Heart left ventricle (tissue), 16 donors: ENCODE measurements at regions of chr9 and their contacts with region 1.

Region 1: GRCh38 chr9:136944519-136945279 is at the starts of genes C8G and FBXW5:
- DNase-seq: peak; percentile 96 to 99 (median 97)
- ATAC-seq: peak; percentile 23 to 72 (median 67)
- H3K4me3 ChIP-seq: peak within 1 kb of the TSS; percentile 67 to 97 (median 92)
- H3K27ac ChIP-seq: peak within 1 kb of the TSS; percentile 90 to 98 (median 97)
- H3K4me1 ChIP-seq: peaks cover 7 to 70% (median 40%) of the 10 kb centered on the region in 12 donors
- H3K27me3 ChIP-seq: no peaks in the 10 kb centered on the region
- CTCF ChIP-seq: peak; percentile 90 to 100 (median 98)
- POLR2A ChIP-seq: peak; percentile 59 to 84
- total RNA-seq, gene C8G: 1.2 to 3.7 (median 1.5) TPM in 7 of 9 donors, not detected in the others
- total RNA-seq, gene FBXW5: 110 to 388 (median 147) TPM

Region 2: GRCh38 chr9:136790927-136791641 is 153.6 kb before region 1 on chr9 and contains the start of gene TMEM141:
- intact Hi-C with region 1: loop called in 7 of 10 experiments (anchors 1 to 5 kb)
- DNase-seq: peak; percentile 100
- ATAC-seq: peak; percentile 95 to 96 (median 96)
- H3K4me3 ChIP-seq: peak within 1 kb of the TSS; percentile 68 to 94 (median 82)
- H3K27ac ChIP-seq: peak within 1 kb of the TSS; percentile 92 to 99 (median 96)
- H3K4me1 ChIP-seq: peaks cover 6 to 58% (median 29%) of the 10 kb centered on the region in 12 donors
- H3K27me3 ChIP-seq: peaks cover 0 to under 1% (median 0%) of the 10 kb centered on the region in 9 donors
- CTCF ChIP-seq: no peak
- POLR2A ChIP-seq: peak in 1 of 2 donors; percentile 82
- total RNA-seq, gene TMEM141: 45.6 to 122 (median 63.3) TPM

Region 3: GRCh38 chr9:136840140-136840687 is 104.5 kb before region 1 on chr9:
- intact Hi-C with region 1: loop called in 4 of 10 experiments (anchors 5 kb)
- DNase-seq: no peak
- ATAC-seq: no peak
- H3K4me3 ChIP-seq: no peak overlapping the region
- H3K27ac ChIP-seq: no peak overlapping the region
- H3K4me1 ChIP-seq: peaks cover 10 to 41% (median 27%) of the 10 kb centered on the region in 12 donors
- H3K27me3 ChIP-seq: peaks cover 0 to 23% (median 9%) of the 10 kb centered on the region in 9 donors
- CTCF ChIP-seq: no peak
- POLR2A ChIP-seq: no peak

Region 4: DNA sequence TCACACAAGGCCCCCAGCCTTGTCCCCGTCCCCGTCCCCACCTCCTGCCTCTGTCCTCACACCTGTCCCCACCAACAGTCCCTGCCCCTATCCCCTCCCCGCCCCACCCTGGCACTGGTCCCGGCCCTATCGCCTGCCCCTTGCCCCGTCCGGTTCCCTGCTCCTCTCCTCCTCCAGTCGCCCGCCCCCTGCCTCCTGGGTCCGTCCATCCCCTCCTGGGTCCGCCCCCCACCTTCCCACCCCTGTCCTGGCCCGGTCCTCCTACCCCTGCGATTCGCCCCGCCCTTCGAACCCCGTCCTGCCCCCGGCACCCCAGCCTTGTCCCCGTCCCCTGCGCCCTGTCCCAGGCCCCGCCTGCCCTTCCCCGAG is 79.0 kb before region 1 on chr9:
- intact Hi-C with region 1: loop called in 4 of 10 experiments (anchors 1 to 5 kb)
- DNase-seq: peak in 3 of 5 donors; percentile 25 to 49 (median 43)
- ATAC-seq: peak in 2 of 4 donors; percentile 36 to 43
- H3K4me3 ChIP-seq: peak overlapping the region; percentile 41 to 97 (median 82)
- H3K27ac ChIP-seq: peak overlapping the region in 11 of 12 donors; percentile 76 to 96 (median 90)
- H3K4me1 ChIP-seq: peaks cover 0 to 27% (median 19%) of the 10 kb centered on the region in 12 donors
- H3K27me3 ChIP-seq: no peaks in the 10 kb centered on the region
- CTCF ChIP-seq: no peak
- POLR2A ChIP-seq: no peak

Region 5: DNA sequence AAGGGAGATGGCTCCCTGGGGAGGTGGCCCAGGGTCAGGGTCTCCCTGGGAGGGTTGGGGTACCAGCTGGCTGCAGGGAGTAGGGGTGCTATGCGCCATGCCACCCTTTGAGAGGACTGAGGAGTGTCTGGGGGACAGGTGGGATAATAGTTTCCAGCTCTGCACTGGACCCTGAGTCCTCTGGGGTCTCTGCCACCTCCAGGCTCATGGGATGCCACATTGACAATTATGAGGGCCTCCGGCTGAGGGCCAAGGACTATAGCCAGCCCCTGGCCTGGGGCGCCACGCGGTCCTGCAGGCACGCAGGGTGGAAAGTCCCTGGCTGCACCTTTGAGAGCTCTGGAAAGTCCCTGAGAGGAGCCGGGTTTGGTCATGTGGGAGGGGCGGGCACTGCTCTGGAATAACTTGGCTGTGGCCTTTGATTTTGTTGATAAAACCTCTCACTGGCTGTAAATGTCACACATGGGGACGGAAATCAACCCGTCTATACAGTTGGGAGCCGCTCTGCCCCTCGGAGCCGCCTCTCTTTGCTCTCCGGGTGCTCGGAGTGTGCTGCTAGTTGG is 42.4 kb before region 1 on chr9:
- intact Hi-C with region 1: loop called in 3 of 10 experiments (anchors 5 kb)
- DNase-seq: peak in 4 of 5 donors; percentile 78 to 85 (median 82)
- ATAC-seq: peak; percentile 84 to 94 (median 91)
- H3K4me3 ChIP-seq: peak overlapping the region in 5 of 12 donors; percentile 1 to 23 (median 11)
- H3K27ac ChIP-seq: peak overlapping the region; percentile 30 to 94 (median 80)
- H3K4me1 ChIP-seq: peaks cover 0 to 37% (median 32%) of the 10 kb centered on the region in 12 donors
- H3K27me3 ChIP-seq: no peaks in the 10 kb centered on the region
- CTCF ChIP-seq: no peak
- POLR2A ChIP-seq: peak in 1 of 2 donors; percentile 25

Region 6: GRCh38 chr9:136915632-136916329 is 28.9 kb before region 1 on chr9:
- intact Hi-C with region 1: no loop called
- DNase-seq: no peak
- ATAC-seq: no peak
- H3K4me3 ChIP-seq: no peak overlapping the region
- H3K27ac ChIP-seq: no peak overlapping the region
- H3K4me1 ChIP-seq: no peaks in the 10 kb centered on the region
- H3K27me3 ChIP-seq: no peaks in the 10 kb centered on the region
- CTCF ChIP-seq: no peak
- POLR2A ChIP-seq: no peak

Region 7: DNA sequence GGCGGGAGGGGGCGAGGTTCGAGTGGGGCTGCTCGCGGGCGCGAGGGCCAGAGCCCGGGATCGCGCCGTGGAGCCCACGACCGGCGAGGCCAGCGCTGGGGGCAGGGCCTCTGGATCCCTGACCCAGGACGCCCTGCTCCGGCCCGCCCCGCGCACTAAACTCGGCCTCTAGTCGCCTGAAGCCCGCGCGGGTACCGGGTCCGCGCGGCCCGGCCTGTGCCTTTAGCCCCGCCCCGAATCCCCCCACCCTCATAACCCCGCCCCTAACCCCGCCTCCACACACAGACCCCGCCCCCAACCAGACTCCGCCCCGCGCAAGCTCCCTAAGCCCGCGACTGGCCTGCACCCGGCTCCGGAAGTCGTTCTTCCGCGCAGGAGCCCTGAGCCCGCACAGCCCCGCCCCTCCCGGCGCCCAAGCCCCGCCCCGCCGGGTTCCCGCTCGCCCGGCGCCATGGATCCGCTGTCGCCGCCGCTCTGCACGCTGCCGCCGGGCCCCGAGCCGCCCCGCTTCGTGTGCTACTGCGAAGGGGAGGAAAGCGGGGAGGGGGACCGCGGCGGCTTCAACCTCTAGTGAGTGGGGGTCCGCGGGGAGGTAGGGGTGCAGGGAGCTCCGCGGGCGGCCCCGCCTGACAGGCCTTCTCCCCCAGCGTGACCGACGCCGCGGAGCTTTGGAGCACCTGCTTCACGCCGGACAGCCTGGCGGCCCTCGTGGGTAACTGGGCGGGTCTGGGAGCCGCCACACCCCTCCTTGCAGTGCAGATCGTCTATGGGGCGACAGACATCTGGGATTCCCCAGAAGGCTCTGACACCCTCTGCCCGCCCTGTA is 47.5 kb after region 1 on chr9 and contains the start of gene PAXX:
- intact Hi-C with region 1: loop called in 5 of 10 experiments (anchors 1 to 5 kb)
- DNase-seq: peak; percentile 94 to 97 (median 95)
- ATAC-seq: peak; percentile 89 to 94 (median 94)
- H3K4me3 ChIP-seq: peak within 1 kb of the TSS; percentile 60 to 98 (median 82)
- H3K27ac ChIP-seq: peak within 1 kb of the TSS; percentile 8 to 91 (median 87)
- H3K4me1 ChIP-seq: peaks cover 3 to 55% (median 31%) of the 10 kb centered on the region in 12 donors
- H3K27me3 ChIP-seq: peaks cover 0 to 28% (median 0%) of the 10 kb centered on the region in 9 donors
- CTCF ChIP-seq: no peak
- POLR2A ChIP-seq: peak in 1 of 2 donors; percentile 47
- total RNA-seq, gene PAXX: 15.0 to 35.3 (median 19.4) TPM

Region 8: DNA sequence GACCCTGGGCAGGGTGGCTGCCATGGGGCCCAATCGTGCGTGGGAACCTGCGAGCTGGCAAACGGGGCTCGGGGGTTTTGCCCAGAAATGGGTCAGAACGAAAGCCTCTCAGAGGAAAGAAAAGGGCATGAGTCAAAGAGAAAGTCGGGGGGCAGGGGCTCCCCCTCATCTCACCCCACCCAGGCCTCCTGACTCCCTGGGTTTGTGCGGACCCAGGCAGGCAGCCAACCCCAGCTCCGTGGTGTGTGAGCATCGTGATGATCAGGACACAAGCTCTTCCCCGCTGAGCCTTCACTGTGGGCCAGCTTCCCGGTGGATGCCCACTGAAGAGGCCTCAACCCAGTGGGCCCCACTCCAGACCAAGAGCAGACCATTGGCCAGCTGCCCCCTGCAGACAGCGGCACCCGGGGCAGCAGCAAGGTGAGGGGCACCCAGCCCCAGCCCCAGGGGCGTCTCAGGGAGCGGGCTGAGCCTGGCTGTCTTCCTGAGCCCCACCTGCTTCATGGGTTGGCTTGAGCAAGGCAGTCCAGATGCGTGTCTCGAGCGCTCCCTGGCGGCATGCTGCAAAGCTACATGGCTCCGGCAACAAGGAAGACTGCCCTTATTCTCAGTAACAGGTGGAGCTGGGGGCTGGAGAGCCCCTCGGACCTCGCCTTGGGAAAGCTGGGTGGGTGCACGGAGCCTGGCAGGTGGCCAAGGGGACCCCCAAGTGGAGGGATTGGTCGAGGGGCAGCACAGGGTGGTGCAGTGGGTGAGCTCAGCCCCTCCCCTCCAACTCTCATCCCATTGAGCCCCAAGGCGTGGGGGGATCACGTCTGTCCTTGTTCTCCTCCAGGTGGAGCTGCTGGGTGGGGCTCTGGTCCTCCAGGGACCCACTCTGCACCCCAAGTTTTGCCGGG is 90.4 kb after region 1 on chr9:
- intact Hi-C with region 1: loop called in 9 of 10 experiments (anchors 1 to 5 kb)
- DNase-seq: peak; percentile 79 to 93 (median 80)
- ATAC-seq: peak; percentile 64 to 82 (median 76)
- H3K4me3 ChIP-seq: peak overlapping the region in 2 of 12 donors; percentile 4 to 27
- H3K27ac ChIP-seq: peak overlapping the region in 2 of 12 donors; percentile 38 to 68
- H3K4me1 ChIP-seq: peaks cover 0 to 50% (median 11%) of the 10 kb centered on the region in 12 donors
- H3K27me3 ChIP-seq: no peaks in the 10 kb centered on the region
- CTCF ChIP-seq: peak; percentile 85 to 95 (median 90)
- POLR2A ChIP-seq: peak in 1 of 2 donors; percentile 9

Region 9: DNA sequence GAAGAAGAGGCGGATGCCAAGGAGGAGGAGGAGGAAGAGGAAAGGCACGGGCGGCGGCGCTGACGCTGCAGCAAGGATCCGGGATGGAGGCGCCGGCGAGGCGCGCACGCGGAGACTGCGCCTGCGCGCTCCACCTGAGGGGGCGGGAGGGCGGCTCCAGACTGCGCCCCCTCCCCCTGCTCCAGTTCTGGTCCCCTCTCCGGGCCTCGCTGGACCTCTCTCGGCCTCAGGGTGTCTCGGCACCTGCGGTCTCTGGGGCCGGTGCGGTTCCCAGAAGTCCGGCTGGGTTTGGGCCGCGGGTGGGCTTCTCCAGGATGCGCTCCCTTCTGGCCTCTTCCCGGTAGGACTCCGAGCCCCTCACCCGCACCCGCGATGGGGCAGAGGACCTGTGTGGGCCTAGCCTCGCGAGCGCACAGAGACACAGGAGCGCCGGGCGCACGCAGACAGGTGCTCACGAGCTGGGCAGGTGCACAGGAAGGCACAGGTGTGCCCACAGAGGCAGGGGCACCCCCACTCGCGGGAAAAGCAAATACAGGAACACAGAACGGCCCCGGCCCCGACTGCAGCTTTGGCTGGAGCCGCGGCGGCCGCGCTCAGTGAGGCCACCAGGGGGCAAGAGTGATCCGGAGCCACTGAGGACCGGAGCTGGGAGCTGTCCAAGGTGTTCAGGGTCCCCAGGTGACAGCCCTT is 101.5 kb after region 1 on chr9 and contains the start of gene NPDC1:
- intact Hi-C with region 1: no loop called
- DNase-seq: peak; percentile 82 to 90 (median 83)
- ATAC-seq: peak; percentile 45 to 71 (median 62)
- H3K4me3 ChIP-seq: peak within 1 kb of the TSS; percentile 62 to 92 (median 72)
- H3K27ac ChIP-seq: peak within 1 kb of the TSS; percentile 80 to 96 (median 88)
- H3K4me1 ChIP-seq: peaks cover 0 to 53% (median 35%) of the 10 kb centered on the region in 12 donors
- H3K27me3 ChIP-seq: peaks cover 0 to 56% (median 26%) of the 10 kb centered on the region in 9 donors
- CTCF ChIP-seq: peak; percentile 83 to 95 (median 88)
- POLR2A ChIP-seq: peak in 1 of 2 donors; percentile 36
- total RNA-seq, gene NPDC1: 45.1 to 114 (median 55.1) TPM

Region 10: DNA sequence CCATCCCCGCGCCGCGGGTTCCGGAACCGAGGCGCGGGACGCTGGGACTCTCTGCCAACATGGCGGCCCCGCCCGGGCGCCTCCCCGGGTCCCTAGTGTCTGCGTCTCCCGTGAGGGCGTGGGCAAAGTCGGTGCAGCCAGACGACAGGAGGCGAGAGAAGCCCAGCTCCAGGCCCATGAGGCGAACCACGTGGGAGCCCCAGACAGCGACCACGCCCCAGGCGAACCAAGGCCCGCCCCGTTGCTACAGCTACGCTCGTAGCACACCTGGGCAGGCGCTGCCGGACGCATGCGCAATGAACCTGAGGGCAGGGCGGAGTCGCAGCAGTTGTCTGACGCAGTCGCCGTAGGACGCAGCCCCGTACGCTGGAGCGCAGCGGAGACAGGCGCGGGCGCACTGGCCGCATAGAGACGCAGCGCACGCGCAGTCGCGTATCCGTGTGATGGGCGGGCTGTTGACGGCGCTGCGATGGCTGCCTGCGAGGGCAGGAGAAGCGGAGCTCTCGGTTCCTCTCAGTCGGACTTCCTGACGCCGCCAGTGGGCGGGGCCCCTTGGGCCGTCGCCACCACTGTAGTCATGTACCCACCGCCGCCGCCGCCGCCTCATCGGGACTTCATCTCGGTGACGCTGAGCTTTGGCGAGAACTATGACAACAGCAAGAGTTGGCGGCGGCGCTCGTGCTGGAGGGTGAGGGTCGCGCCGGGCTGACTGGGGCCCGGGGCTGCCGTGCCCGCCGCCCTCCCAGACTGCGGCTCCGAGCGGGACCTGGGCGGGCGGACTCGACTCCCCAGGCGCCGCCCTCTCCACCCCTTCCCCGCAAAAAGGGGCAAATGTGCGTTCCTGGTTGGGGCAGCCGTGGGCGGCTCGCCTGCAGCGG is 142.1 kb after region 1 on chr9 and contains the start of gene MAN1B1:
- intact Hi-C with region 1: no loop called
- DNase-seq: peak; percentile 98 to 100 (median 99)
- ATAC-seq: peak; percentile 90 to 97 (median 94)
- H3K4me3 ChIP-seq: peak within 1 kb of the TSS; percentile 56 to 94 (median 78)
- H3K27ac ChIP-seq: peak within 1 kb of the TSS; percentile 85 to 97 (median 96)
- H3K4me1 ChIP-seq: peaks cover 0 to 31% (median 21%) of the 10 kb centered on the region in 12 donors
- H3K27me3 ChIP-seq: no peaks in the 10 kb centered on the region
- CTCF ChIP-seq: peak in 1 of 12 donors; percentile 15
- POLR2A ChIP-seq: peak in 1 of 2 donors; percentile 77
- total RNA-seq, gene MAN1B1: 17.6 to 40.6 (median 21.7) TPM